Sigmoid colon (tissue), 7 donors: ENCODE measurements at regions of chrX and their contacts with region 1.

Region 1: DNA sequence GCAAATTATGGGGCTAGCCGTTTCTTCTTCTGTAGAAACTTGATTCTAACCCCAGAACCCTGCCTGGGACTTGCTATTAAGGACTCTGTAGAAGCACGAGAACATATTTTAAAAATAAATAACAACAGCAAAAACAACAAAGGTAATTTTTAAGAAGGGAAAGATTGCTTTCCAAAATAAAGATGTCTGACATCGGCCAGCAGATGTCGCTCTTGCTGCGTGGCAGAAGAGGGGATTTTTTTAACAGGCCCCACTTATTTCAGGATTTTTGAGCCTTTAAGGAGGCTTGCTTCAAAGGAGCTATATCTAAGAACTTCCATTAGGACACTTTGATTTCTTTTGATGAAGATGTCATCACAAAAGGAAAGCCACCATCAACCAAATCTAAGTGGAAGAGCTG is 62.8 kb upstream of the EGFL6 start:
- DNase-seq: no peak
- H3K4me3 ChIP-seq: no peak overlapping the region
- H3K27ac ChIP-seq: no peak overlapping the region
- H3K4me1 ChIP-seq: peaks cover 0 to 3% (median 0%) of the 10 kb centered on the region in 4 donors
- H3K27me3 ChIP-seq: peaks cover 0 to 4% (median 0%) of the 10 kb centered on the region in 3 donors
- CTCF ChIP-seq: peak; percentile 36 to 57 (median 49)
- EP300 ChIP-seq: no peak
- POLR2A ChIP-seq: no peak

Region 2: DNA sequence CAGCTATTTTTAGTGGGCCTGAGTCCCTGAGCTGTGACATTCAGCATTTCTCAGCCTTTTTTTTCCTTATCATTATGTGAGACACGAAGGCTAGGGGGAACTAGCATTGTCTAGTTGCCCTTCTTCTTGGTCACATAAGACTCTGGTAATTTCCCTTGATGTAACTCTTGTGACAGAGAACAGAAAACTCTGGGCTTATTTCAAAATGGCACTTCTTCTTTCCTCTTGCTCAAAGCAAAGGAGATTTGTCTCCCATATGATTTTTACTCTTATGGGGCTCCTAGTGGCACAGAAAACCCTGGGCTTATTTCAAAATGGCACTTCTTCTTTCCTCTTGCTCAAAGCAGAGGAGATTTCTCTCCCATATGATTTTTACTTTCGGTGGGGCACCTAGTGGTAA is 201.5 kb before region 1 on chrX:
- intact Hi-C with region 1: no loop called
- DNase-seq: no peak
- H3K4me3 ChIP-seq: no peak overlapping the region
- H3K27ac ChIP-seq: no peak overlapping the region
- H3K4me1 ChIP-seq: no peaks in the 10 kb centered on the region
- H3K27me3 ChIP-seq: no peaks in the 10 kb centered on the region
- CTCF ChIP-seq: no peak
- EP300 ChIP-seq: no peak
- POLR2A ChIP-seq: no peak

Region 3: DNA sequence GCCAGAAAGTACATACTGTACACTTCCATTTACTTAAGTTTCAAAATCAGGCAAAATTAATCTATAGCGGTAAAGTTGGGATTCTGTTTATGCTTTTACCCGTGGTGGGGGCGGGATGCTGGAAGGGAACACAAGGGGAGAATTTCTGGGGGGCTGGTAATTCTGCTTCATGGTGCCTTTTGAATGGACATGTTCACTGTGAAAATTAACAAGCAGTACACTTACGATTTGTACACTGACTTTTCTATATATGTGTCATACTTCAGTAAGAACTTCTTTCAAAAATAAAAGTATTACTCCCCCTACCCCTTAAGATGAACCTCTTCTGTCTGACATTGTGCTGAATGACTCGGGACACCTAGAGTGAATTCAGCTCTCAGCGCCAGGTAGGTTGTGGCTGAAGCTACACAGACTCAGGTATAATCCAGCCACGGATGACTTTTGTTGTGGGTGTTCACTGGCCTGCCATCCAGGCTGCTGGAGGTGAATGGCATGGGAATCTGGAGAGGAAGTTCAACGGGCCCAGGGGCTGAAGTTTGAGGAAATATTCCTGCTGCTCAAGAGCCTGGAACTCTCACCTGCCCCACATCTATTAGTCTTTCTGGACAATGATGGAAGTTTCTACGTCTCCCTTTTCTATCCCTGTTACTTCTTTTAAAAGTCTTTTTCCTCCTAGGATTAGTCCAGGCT is 139.0 kb after region 1 on chrX:
- intact Hi-C with region 1: loop called (anchors 2 kb)
- DNase-seq: no peak
- H3K4me3 ChIP-seq: no peak overlapping the region
- H3K27ac ChIP-seq: no peak overlapping the region
- H3K4me1 ChIP-seq: peaks cover 0 to 10% (median 2%) of the 10 kb centered on the region in 4 donors
- H3K27me3 ChIP-seq: no peaks in the 10 kb centered on the region
- CTCF ChIP-seq: no peak
- EP300 ChIP-seq: no peak
- POLR2A ChIP-seq: no peak

Region 4: GRCh38 chrX:13750204-13750603 is 243.6 kb after region 1 on chrX:
- intact Hi-C with region 1: loop called (anchors 10 kb)
- DNase-seq: no peak
- H3K4me3 ChIP-seq: no peak overlapping the region
- H3K27ac ChIP-seq: no peak overlapping the region
- H3K4me1 ChIP-seq: no peaks in the 10 kb centered on the region
- H3K27me3 ChIP-seq: no peaks in the 10 kb centered on the region
- CTCF ChIP-seq: peak in 3 of 4 experiments; percentile 14 to 42 (median 22)
- EP300 ChIP-seq: no peak
- POLR2A ChIP-seq: no peak